Motor neuron (in vitro differentiated cells): ENCODE measurements at regions of chr16 and their contacts with region 1.

Region 1: GRCh38 chr16:53054670-53055485 is at the start of gene CHD9:
- ATAC-seq: peak; percentile 70 to 97 (median 95)
- H3K4me3 ChIP-seq: peak within 1 kb of the TSS; percentile 59 to 77 (median 68)
- H3K27ac ChIP-seq: peak within 1 kb of the TSS; percentile 48 to 76
- H3K4me1 ChIP-seq: peaks cover 5 to 11% of the 10 kb centered on the region in 2 donors
- total RNA-seq, gene CHD9: 57.0 to 109 (median 65.7) TPM

Region 2: GRCh38 chr16:52757746-52758472 is 297.0 kb before region 1 on chr16:
- in situ Hi-C with region 1: no loop called
- ATAC-seq: no peak
- H3K4me3 ChIP-seq: no peak overlapping the region
- H3K27ac ChIP-seq: no peak overlapping the region
- H3K4me1 ChIP-seq: peaks cover 0 to 5% of the 10 kb centered on the region in 2 donors

Region 3: GRCh38 chr16:53142823-53143568 is 88.1 kb after region 1 on chr16:
- in situ Hi-C with region 1: no loop called
- ATAC-seq: no peak
- H3K4me3 ChIP-seq: no peak overlapping the region
- H3K27ac ChIP-seq: no peak overlapping the region
- H3K4me1 ChIP-seq: no peaks in the 10 kb centered on the region

Region 4: GRCh38 chr16:53159781-53160436 is 105.0 kb after region 1 on chr16:
- in situ Hi-C with region 1: loop called in 3 of 9 experiments (anchors 25 kb)
- ATAC-seq: peak; percentile 32 to 81 (median 48)
- H3K4me3 ChIP-seq: no peak overlapping the region
- H3K27ac ChIP-seq: no peak overlapping the region
- H3K4me1 ChIP-seq: no peaks in the 10 kb centered on the region

Region 5: DNA sequence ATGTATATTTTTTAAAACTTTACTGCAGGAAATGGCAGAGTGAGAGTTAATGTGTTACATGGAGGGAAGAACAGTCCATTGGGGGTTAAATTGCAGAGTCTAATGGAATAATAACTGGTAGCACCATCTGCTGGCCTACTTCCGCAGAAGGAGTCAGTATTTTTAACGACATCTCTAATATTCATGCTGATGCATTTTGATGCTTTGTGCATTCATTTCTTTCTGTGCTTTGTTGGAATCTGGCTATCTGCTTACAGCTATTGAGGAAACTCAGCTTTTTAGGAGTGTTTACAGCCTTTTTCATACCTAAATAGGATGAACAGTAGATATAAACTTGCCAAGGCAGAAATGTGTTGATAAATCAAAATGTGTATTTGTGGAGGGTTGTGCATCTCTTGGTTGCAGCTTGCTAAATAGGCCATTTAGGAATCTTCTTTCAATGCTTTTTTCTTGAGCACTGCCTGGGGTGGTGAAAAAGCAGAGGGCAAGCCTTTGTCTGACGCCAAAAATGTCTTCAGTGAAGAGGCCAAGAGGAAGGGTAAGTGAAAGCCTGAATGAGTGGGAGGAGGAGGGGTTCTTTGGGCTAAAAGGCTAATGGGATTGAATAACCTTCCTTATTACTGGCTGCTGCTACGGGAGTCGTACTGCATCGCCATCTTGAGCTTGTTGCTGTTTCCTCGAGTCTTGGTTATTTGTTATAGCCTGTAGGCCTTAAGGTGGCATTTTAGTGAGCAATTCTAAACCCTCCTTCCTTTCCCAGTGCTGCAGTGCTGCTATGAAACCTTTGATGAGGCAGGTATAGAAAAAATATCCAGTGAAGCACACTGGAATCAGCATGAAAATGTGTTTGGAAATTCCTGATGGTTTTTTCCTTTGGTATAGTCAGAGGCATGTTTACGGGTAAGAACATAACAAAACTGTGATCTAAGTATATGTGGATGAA is 153.2 kb after region 1 on chr16:
- in situ Hi-C with region 1: loop called in 1 of 9 experiments (anchors 25 kb)
- ATAC-seq: peak; percentile 92 to 99 (median 98)
- H3K4me3 ChIP-seq: peak overlapping the region; percentile 50 to 76 (median 55)
- H3K27ac ChIP-seq: peak overlapping the region; percentile 93 to 95
- H3K4me1 ChIP-seq: peaks cover 2 to 17% of the 10 kb centered on the region in 2 donors